ENCODE measurements at regions of chr4 and their contacts with region 1.

Region 1: GRCh38 chr4:187504974-187505797 is 490.4 kb upstream of the ZFP42 start:
- DNase-seq: no peak
- H3K4me3 ChIP-seq: no peak overlapping the region
- H3K4me3 Mint-ChIP-seq: peak overlapping the region in 1 of 2 donors; percentile 47
- H3K27ac ChIP-seq: no peak overlapping the region
- H3K27ac Mint-ChIP-seq: no peak overlapping the region
- H3K4me1 ChIP-seq: no peaks in the 10 kb centered on the region
- H3K4me1 Mint-ChIP-seq: no peaks in the 10 kb centered on the region
- H3K27me3 ChIP-seq: no peaks in the 10 kb centered on the region
- H3K27me3 Mint-ChIP-seq: no peaks in the 10 kb centered on the region
- CTCF ChIP-seq: no peak

Region 2: GRCh38 chr4:186326391-186326790 is 1178.8 kb before region 1 on chr4:
- intact Hi-C with region 1: loop called in 1 of 2 experiments (anchors 10 kb)
- DNase-seq: no peak
- H3K4me3 ChIP-seq: no peak overlapping the region
- H3K4me3 Mint-ChIP-seq: no peak overlapping the region
- H3K27ac ChIP-seq: no peak overlapping the region
- H3K27ac Mint-ChIP-seq: no peak overlapping the region
- H3K4me1 ChIP-seq: no peaks in the 10 kb centered on the region
- H3K4me1 Mint-ChIP-seq: no peaks in the 10 kb centered on the region
- H3K27me3 ChIP-seq: no peaks in the 10 kb centered on the region
- H3K27me3 Mint-ChIP-seq: no peaks in the 10 kb centered on the region
- CTCF ChIP-seq: no peak

Region 3: GRCh38 chr4:187469627-187470026 is 35.6 kb before region 1 on chr4:
- intact Hi-C with region 1: no loop called
- DNase-seq: no peak
- H3K4me3 ChIP-seq: no peak overlapping the region
- H3K4me3 Mint-ChIP-seq: no peak overlapping the region
- H3K27ac ChIP-seq: no peak overlapping the region
- H3K27ac Mint-ChIP-seq: no peak overlapping the region
- H3K4me1 ChIP-seq: no peaks in the 10 kb centered on the region
- H3K4me1 Mint-ChIP-seq: no peaks in the 10 kb centered on the region
- H3K27me3 ChIP-seq: no peaks in the 10 kb centered on the region
- H3K27me3 Mint-ChIP-seq: no peaks in the 10 kb centered on the region
- CTCF ChIP-seq: no peak